ENCODE measurements at regions of chr11 and their contacts with region 1.

Region 1: DNA sequence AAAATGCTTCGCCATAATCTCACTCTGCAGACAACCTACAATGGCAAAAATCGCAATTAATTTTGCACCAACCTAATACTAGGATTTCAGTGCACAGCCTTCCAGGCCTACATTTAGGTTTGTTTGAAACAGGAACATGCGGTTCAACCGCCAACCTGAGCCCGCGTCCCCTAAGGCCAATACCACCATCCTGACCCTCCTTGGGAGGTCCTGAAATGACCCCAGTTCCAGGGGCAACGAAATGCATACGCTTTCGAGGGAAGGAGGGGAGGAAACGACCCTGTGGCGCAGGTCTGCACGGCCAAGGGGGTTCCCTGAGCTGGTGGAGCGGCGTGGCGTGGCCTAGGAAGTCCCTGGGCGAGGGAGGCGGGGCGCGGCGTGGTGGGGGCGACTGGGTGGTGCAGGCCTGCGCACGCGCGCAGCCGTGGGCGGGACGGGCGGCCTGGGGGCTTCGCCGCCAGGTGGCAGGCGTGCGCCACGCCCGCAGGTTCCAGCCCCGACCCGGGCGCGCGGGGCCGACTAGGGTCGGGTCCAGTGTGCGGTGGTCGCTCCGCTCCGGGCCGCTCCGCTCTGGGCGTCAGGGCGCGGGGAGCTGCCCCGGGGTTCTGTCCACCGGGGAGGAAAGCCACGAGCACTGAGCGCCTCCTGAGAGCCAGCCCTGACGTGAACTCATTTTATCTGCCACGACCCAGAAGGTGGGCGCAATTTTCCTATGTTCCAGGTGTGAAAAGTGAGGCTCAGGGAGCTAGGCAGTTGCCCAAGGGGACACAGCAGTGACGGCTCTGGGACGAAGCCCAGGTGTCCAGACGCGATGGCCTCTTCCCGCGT is 94.1 kb downstream of the SWAP70 start:
- DNase-seq: peak; percentile 98
- H3K4me3 Mint-ChIP-seq: peak overlapping the region; percentile 83
- H3K27ac Mint-ChIP-seq: peak overlapping the region; percentile 89
- H3K4me1 Mint-ChIP-seq: peaks cover 56% of the 10 kb centered on the region
- H3K27me3 Mint-ChIP-seq: peaks cover 2% of the 10 kb centered on the region

Region 2: DNA sequence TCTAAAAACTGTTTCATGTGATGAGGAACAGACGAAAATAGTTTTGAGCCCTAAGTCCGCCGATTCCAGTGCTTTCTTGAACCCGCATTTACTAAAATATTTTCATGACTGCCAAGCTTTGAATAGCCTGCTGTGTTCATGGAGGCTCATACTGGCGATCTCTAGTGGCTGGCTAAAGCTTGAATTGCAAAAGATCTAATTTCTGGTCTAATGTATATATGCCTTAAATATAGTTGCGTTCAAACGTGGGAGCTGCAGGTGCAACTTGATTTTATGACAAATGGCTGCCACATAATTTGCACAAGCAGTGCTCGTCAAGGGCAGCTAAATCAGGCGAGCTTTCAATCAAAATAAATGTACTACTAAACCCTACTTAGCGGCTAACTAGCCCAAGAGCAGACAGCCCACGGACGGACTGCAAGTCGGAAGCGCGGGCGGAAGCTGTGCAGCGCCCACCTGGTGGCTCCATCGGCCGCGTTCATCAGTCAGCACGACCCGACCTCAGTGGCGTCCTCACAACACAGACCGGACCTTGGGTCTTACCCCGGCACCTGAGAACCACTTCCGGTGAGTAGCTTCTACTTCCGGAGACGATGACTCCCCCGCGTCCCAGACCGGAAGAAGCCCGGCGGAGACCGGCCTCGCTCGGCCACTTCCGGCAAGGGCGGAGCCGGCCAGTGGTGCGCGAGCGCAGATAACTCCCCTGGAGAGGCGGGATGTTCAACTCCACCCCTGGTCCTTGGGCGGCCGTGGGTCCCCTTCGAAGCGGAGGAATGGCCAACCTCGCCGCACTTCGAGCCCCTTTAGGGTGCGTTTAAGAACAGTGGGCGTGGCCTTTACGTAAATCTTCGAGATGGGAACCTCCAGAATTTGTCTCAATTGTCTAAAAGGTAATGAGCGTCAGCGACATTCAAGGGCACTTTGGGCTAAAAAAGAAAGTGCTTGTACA is 1069.3 kb before region 1 on chr11:
- intact Hi-C with region 1: loop called (anchors 10 kb)
- DNase-seq: peak; percentile 96
- H3K4me3 Mint-ChIP-seq: peak overlapping the region; percentile 94
- H3K27ac Mint-ChIP-seq: peak overlapping the region; percentile 88
- H3K4me1 Mint-ChIP-seq: peaks cover 43% of the 10 kb centered on the region
- H3K27me3 Mint-ChIP-seq: no peaks in the 10 kb centered on the region

Region 3: GRCh38 chr11:9639985-9640384 is 118.0 kb before region 1 on chr11:
- intact Hi-C with region 1: no loop called
- DNase-seq: no peak
- H3K4me3 Mint-ChIP-seq: no peak overlapping the region
- H3K27ac Mint-ChIP-seq: no peak overlapping the region
- H3K4me1 Mint-ChIP-seq: no peaks in the 10 kb centered on the region
- H3K27me3 Mint-ChIP-seq: peaks cover 5% of the 10 kb centered on the region

Region 4: DNA sequence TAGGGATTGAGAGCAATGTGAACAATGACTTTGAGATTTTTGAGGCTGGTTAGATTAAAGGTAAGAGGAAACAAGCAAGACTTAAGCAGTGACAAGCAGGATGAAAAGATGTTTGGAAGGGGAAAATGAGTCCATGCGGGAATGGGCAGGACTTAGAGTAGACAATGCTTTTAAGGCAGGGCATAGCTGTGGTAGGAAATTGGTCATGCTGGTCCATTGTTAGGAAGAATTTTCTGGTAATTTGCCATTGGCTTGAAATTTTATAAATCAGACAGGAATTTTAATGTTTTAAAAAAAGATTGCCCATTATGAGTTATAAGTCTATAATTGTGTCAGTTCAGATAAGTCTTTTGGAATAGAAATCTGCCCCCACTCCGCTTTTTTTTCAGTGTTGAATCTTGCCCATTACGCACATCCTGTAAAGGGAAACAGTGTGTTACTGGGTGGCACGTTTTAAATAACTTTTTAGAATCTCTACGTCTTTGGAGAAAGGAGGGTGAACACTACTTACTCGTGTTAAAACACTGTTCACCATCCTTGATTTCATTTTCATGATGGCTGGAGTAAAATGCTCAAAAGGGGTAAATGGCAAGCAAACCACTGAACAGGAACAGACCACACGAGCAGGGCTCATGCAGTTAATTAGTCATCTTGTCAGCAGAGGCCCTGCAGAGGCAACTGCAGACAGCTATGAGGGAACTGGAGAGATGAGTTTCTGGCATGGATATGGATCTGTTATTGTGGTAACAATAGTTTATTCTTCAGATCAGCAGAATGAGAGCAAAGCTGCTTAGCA is 69.1 kb before region 1 on chr11:
- intact Hi-C with region 1: no loop called
- DNase-seq: peak; percentile 62
- H3K4me3 Mint-ChIP-seq: no peak overlapping the region
- H3K27ac Mint-ChIP-seq: no peak overlapping the region
- H3K4me1 Mint-ChIP-seq: peaks cover 3% of the 10 kb centered on the region
- H3K27me3 Mint-ChIP-seq: no peaks in the 10 kb centered on the region

Region 5: GRCh38 chr11:9840460-9841004 is 82.5 kb after region 1 on chr11:
- intact Hi-C with region 1: loop called (anchors 1 kb)
- DNase-seq: peak; percentile 71
- H3K4me3 Mint-ChIP-seq: peak overlapping the region; percentile 23
- H3K27ac Mint-ChIP-seq: peak overlapping the region; percentile 71
- H3K4me1 Mint-ChIP-seq: peaks cover 33% of the 10 kb centered on the region
- H3K27me3 Mint-ChIP-seq: no peaks in the 10 kb centered on the region

Region 6: DNA sequence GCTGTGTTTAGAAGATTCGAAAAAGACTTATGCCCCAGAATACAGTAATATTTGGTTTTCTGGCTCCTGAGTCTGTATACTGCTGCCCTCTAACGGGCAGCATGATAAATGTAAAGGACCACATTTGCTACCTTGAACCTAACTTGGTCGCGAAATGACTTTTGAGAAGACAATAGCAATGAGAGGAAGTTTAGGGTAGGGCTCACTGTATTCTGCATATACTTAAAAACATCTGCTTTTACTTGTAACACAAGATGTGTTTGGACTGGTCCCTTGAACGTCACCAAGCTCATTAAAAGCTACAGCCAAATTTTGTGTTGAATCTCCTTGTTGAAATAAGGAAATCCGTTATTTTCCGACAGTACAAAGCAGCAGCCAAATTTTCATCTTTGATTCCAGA is 215.0 kb after region 1 on chr11:
- intact Hi-C with region 1: loop called (anchors 1 kb)
- DNase-seq: peak; percentile 80
- H3K4me3 Mint-ChIP-seq: no peak overlapping the region
- H3K27ac Mint-ChIP-seq: no peak overlapping the region
- H3K4me1 Mint-ChIP-seq: peaks cover 4% of the 10 kb centered on the region
- H3K27me3 Mint-ChIP-seq: no peaks in the 10 kb centered on the region

Region 7: GRCh38 chr11:10208131-10208575 is 450.1 kb after region 1 on chr11:
- intact Hi-C with region 1: loop called (anchors 1 kb)
- DNase-seq: peak; percentile 68
- H3K4me3 Mint-ChIP-seq: no peak overlapping the region
- H3K27ac Mint-ChIP-seq: no peak overlapping the region
- H3K4me1 Mint-ChIP-seq: peaks cover 1% of the 10 kb centered on the region
- H3K27me3 Mint-ChIP-seq: peaks cover 21% of the 10 kb centered on the region

Region 8: DNA sequence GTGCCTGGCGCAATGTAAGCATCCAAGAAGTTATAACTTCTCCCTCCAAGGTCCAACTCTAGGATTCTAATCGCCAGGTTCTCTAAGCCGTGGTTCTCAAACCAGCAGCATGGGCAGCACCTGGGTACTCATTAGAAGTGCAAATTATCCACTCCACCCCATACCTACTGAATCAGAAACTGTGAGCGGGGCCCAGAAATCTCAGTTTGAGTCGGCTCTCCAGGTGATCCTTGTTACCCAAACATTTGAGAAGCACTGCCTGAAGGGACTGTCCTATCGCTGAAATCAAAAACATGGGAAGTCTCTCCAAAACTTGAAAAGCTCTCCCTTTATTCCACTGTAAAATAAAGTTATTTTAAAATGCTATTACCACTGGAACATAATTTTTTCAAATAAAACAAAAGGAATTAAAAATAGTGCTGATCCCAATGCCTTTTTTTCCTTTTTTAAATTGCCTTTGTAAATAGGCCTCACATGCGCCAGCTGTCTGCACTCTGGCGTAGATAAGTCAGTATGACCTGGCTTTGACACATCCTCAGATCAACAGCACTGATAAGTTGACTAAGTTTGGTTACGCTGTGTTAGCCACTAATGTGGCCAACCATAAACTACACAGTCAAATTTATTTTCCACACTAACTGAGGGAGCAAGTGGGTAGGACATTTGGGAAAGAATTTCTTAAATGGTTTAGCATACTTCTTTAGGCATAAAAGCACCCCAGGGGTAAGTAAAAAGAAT is 984.6 kb after region 1 on chr11:
- intact Hi-C with region 1: loop called (anchors 10 kb)
- DNase-seq: peak; percentile 73
- H3K4me3 Mint-ChIP-seq: peak overlapping the region; percentile 66
- H3K27ac Mint-ChIP-seq: peak overlapping the region; percentile 49
- H3K4me1 Mint-ChIP-seq: peaks cover 22% of the 10 kb centered on the region
- H3K27me3 Mint-ChIP-seq: peaks cover 2% of the 10 kb centered on the region

Region 9: DNA sequence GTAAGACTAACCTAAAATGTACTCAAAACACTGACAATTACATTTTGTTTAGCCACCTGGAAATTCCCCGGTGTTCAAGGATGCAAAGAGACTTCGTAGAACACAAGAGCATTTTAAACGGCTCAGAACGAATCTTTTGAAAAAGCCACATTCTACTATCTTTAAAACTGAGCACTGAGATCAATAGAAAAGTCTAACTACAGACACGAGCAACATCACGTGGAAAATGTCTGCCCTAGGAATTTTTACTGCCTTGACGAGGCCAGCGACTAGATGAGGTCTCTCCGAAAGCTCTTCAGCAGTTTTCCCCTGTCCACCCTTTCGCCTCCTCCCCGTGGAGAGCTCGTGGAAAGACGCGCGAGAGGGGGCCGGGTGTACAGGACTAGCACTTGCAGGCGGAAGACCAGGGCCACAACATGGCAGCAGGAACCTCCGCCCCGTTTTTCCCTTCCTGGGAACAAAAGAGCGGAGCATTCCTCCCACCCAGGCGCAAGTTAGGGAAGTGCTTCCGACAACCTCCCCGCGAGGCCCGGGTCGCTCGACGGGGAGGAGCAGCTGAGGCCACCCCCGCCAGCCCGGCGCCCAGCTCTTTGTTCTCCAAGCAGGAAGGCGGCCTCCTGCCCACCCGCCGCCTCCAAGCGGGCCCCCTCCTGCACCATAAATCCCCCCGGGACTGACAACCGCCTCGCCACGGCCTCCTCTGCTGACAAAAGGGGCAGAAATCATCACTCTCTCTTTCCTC is 1049.6 kb after region 1 on chr11:
- intact Hi-C with region 1: no loop called
- DNase-seq: peak; percentile 83
- H3K4me3 Mint-ChIP-seq: peak overlapping the region; percentile 95
- H3K27ac Mint-ChIP-seq: peak overlapping the region; percentile 98
- H3K4me1 Mint-ChIP-seq: peaks cover 36% of the 10 kb centered on the region
- H3K27me3 Mint-ChIP-seq: no peaks in the 10 kb centered on the region

Measured in activated CD4-positive, alpha-beta T cell treated with anti-CD3 and anti-CD28 coated beads, Interleukin-2, amount 10 ng/mL, durations not matched to agents 24 days and 14 days (primary cell).